Activated CD8-positive, alpha-beta T cell treated with anti-CD3 and anti-CD28 coated beads, Interleukin-2, amount 10 ng/mL, durations not matched to agents 7 days and 5 days (primary cell): ENCODE measurements at regions of chr15 and their contacts with region 1.

Region 1: DNA sequence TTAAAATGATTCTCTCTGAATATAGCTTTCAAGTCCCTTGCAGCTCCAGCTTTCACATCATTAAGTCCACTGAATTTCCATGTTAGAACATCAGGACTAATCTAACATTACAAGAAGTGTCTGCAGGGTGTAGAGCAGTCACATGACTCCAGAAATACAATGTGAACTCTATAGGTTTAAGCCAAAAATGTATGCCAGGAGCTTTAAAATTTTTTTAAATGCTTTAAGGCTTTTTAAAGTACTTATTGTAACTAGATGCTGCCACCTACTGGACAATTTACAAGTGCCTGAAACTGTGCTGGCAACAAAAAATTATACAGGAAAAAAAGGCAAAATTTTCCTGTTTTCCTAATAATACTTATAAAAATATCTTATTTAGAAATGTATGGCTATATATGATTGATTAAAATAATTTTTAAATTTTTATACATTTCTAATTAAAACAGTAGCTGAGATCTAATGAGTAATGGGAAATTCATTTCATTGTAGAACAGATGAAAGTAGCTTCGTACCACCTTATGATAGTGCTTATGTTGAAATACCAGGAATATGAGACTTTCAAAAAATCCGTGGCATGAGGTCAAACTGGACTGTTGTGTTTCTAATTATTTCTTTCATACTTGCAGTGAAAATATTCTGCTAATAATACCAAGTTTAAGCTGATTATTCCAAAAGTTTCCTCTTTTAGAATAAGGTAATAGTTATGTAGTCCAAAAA is 25.7 kb downstream of the FSIP1 start:
- DNase-seq: peak; percentile 47
- ATAC-seq: no peak
- H3K4me3 Mint-ChIP-seq: no peak overlapping the region
- H3K27ac Mint-ChIP-seq: no peak overlapping the region
- H3K4me1 Mint-ChIP-seq: no peaks in the 10 kb centered on the region
- H3K27me3 Mint-ChIP-seq: peaks cover 51% of the 10 kb centered on the region

Region 2: DNA sequence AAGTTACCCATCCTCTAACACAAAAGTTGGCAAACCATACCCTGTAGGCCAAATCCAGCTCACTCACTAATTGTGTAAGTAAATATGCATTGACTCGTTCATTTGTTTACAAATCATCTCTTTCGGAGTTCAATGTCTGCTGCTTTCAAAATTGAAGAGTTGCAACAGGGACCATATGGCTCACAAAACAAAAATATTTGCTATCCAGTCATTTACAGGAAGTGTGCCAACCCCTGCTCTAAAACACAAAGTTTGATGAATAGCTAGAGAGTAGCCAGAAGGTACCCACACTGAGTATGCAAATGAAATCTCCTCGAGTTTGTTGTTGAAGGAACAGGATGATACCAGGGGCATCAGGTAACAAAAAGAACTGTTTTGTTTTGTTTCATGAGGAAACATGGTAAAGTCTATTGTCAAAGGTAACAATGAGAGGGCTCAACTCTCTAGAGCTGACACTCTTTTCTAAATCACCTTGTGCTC is 412.3 kb before region 1 on chr15:
- CTCF ChIA-PET with region 1: no interaction called
- POLR2A ChIA-PET with region 1: no interaction called
- DNase-seq: no peak
- ATAC-seq: no peak
- H3K4me3 Mint-ChIP-seq: no peak overlapping the region
- H3K27ac Mint-ChIP-seq: no peak overlapping the region
- H3K4me1 Mint-ChIP-seq: no peaks in the 10 kb centered on the region
- H3K27me3 Mint-ChIP-seq: no peaks in the 10 kb centered on the region

Region 3: GRCh38 chr15:39594056-39594763 is 162.8 kb before region 1 on chr15:
- CTCF ChIA-PET with region 1: interaction called, 21 read pairs
- POLR2A ChIA-PET with region 1: no interaction called
- DNase-seq: no peak
- ATAC-seq: no peak
- H3K4me3 Mint-ChIP-seq: no peak overlapping the region
- H3K27ac Mint-ChIP-seq: peak overlapping the region; percentile 63
- H3K4me1 Mint-ChIP-seq: peaks cover 7% of the 10 kb centered on the region
- H3K27me3 Mint-ChIP-seq: peaks cover 10% of the 10 kb centered on the region

Region 4: DNA sequence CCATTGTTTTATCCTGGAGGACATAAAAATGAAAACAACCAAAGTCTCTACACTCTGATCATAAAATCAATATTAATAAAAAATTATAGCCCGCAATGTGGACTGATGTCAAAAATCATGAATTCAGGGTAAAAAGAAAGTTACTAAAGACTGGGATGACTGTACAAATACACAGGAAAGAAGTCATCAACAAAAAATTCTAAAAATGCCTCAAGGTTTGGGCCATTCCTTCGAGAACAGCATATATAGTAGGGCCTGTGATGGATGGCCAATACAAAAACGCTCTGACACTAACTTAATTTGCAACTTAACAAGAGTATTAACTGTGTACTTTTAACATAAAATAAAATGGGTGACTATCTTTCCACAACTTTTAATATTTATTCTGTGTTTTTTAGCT is 99.2 kb before region 1 on chr15:
- CTCF ChIA-PET with region 1: no interaction called
- POLR2A ChIA-PET with region 1: no interaction called
- DNase-seq: no peak
- ATAC-seq: no peak
- H3K4me3 Mint-ChIP-seq: no peak overlapping the region
- H3K27ac Mint-ChIP-seq: no peak overlapping the region
- H3K4me1 Mint-ChIP-seq: no peaks in the 10 kb centered on the region
- H3K27me3 Mint-ChIP-seq: peaks cover 17% of the 10 kb centered on the region

Region 5: GRCh38 chr15:39680868-39681267 is 76.1 kb before region 1 on chr15:
- CTCF ChIA-PET with region 1: interaction called, 102 read pairs
- POLR2A ChIA-PET with region 1: no interaction called
- DNase-seq: no peak
- ATAC-seq: no peak
- H3K4me3 Mint-ChIP-seq: no peak overlapping the region
- H3K27ac Mint-ChIP-seq: no peak overlapping the region
- H3K4me1 Mint-ChIP-seq: peaks cover 5% of the 10 kb centered on the region
- H3K27me3 Mint-ChIP-seq: peaks cover 9% of the 10 kb centered on the region

Region 6: DNA sequence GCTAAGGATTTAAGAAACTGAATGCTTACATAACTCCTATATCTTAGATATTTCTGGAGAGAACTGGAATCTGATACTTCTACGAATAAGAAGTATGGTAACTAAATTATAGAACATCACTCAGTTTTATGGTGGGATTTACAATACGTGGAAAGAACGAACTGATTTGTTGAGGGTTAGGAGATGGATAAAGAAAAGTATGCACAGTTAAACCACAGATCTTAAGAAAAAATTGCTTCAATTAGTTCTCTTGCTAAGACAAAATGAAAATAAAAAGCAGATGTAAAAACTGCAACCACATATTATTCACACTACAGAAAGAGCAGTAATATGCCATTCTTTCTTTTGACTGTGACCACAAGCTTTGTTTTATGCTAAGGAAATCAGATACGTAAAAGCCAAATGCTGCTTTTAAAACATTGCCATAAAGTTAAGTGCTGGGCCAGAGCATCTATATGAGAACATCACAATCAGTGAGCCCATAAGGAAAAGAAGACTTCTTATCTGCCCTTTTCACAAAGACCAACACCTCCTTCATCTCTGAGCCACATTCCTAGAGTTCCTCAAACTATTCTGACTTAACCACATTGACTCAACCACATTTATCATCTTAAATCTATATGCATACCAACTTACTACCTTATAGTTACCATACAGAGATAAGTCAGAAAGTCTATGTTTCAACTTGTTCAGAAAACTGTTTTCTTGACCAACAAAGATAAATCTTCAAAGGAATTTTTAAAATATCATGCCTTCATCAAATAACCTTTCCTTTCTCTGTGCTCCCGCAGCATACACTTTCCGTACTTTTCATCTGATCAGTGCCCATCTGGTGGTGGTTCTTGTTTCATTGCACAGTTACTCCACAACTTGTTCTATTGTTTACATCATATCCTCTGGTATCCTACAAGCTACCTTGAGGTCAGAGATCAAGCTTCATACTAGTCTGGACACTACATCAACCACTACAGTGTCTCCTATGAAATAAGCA is 36.0 kb before region 1 on chr15:
- CTCF ChIA-PET with region 1: interaction called, 18 read pairs
- POLR2A ChIA-PET with region 1: no interaction called
- DNase-seq: no peak
- ATAC-seq: no peak
- H3K4me3 Mint-ChIP-seq: no peak overlapping the region
- H3K27ac Mint-ChIP-seq: no peak overlapping the region
- H3K4me1 Mint-ChIP-seq: peaks cover 10% of the 10 kb centered on the region
- H3K27me3 Mint-ChIP-seq: peaks cover 4% of the 10 kb centered on the region

Region 7: GRCh38 chr15:39767921-39768320 is 11.0 kb after region 1 on chr15:
- CTCF ChIA-PET with region 1: interaction called, 21 read pairs
- POLR2A ChIA-PET with region 1: no interaction called
- DNase-seq: no peak
- ATAC-seq: no peak
- H3K4me3 Mint-ChIP-seq: no peak overlapping the region
- H3K27ac Mint-ChIP-seq: no peak overlapping the region
- H3K4me1 Mint-ChIP-seq: peaks cover 9% of the 10 kb centered on the region
- H3K27me3 Mint-ChIP-seq: no peaks in the 10 kb centered on the region

Region 8: GRCh38 chr15:39807791-39808190 is 50.8 kb after region 1 on chr15:
- CTCF ChIA-PET with region 1: no interaction called
- POLR2A ChIA-PET with region 1: no interaction called
- DNase-seq: no peak
- ATAC-seq: no peak
- H3K4me3 Mint-ChIP-seq: no peak overlapping the region
- H3K27ac Mint-ChIP-seq: no peak overlapping the region
- H3K4me1 Mint-ChIP-seq: no peaks in the 10 kb centered on the region
- H3K27me3 Mint-ChIP-seq: peaks cover 34% of the 10 kb centered on the region

Region 9: DNA sequence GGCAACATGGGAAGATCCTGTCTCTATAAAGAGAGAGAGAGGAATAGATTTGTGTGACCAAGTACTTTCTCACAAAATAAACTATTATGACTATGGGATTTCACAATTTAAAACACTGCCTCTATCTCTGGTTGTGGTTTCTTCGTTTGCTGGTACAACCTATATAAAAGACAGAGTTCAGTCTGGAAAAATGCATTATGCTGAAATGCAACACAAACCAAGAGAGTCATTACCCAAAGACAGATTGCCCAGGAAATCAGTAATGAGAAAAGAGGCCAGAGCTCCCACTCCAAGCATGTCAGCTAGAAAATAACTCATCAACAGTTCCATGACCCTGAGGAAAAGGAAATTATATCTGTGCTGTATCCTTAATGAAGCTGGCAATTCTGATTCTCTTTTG is 139.9 kb after region 1 on chr15:
- CTCF ChIA-PET with region 1: no interaction called
- POLR2A ChIA-PET with region 1: no interaction called
- DNase-seq: no peak
- ATAC-seq: no peak
- H3K4me3 Mint-ChIP-seq: no peak overlapping the region
- H3K27ac Mint-ChIP-seq: no peak overlapping the region
- H3K4me1 Mint-ChIP-seq: no peaks in the 10 kb centered on the region
- H3K27me3 Mint-ChIP-seq: peaks cover 22% of the 10 kb centered on the region